ENCODE measurements at regions of chr20 and their contacts with region 1.

Region 1: GRCh38 chr20:35207950-35208611 is 18.4 kb upstream of the MMP24 start:
- DNase-seq: peak; percentile 73

Region 2: DNA sequence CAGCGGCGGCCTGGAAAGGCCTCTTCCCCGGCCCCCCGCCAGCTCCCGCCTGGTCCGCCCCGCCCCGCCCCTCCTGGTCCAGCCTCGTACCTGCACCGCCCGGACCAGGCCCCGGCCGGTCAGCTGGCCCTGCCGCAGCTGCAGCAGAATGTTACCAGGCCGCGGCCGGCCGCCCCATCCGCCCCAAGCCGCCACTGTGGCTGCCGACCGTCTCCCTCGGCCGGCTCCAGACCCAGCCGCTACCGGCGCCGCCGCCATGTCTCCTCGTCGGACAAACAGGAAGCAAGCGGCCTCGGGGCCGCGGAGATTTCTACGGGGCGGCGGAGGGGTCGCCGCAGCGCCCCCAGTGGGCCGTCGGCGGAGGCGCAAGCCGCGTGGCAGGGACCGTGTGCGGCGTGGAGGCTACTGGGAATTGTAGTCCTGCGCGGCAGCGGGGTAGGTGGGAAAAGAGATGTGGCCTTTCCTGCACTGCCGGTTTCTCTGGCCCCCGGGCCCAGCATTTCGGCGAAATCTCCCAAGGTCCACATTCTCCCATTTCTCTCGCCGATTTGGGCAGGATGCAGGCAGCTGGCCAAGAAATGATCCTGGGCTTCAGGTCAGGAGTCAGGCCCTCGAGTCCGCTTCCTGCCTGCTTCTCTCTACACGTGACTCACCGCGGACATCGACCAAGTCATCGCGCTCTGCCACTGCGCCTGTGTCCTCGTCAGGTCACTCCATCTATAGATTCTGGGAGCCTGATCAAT is 115.4 kb before region 1 on chr20 and contains the start of gene TRPC4AP:
- CTCF ChIA-PET with region 1: interaction called, 11 read pairs
- POLR2A ChIA-PET with region 1: no interaction called
- DNase-seq: peak; percentile 88

Region 3: DNA sequence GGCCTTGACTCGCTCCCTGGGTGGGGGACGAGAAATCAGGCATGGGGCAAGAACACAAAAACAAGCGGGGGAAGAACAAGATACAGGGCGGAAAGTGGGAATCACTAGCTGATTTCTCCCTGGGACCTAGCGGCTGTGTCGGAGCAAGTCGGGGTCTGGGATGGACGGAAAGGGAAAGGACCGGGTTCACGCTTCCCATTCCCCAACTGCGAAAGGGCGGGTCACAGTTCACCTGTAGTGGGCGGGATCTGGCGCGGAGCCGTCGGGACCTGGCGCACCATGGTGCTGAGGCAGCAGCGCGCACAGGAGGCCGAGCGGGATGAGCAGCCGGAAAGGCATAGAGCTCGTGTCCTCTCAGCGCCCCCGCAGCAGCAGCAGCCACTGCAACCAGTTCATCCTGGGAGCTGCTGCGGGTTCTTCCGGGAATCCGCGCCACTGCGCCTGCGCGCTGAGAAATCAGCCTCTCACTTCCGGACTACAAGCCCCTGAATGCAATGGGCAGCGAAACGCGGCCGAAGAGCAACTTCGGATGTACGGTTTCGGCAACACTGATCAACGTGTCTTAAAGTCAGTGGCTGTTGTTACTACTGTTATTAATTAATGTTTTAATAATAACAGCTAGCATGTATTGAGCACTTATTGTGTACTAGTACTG is 61.0 kb before region 1 on chr20 and contains the start of gene EDEM2:
- CTCF ChIA-PET with region 1: interaction called, 17 read pairs
- POLR2A ChIA-PET with region 1: interaction called, 3 read pairs
- DNase-seq: peak; percentile 95